PC-3 (cell line): ENCODE measurements at regions of chr11 and their contacts with region 1.

Region 1: DNA sequence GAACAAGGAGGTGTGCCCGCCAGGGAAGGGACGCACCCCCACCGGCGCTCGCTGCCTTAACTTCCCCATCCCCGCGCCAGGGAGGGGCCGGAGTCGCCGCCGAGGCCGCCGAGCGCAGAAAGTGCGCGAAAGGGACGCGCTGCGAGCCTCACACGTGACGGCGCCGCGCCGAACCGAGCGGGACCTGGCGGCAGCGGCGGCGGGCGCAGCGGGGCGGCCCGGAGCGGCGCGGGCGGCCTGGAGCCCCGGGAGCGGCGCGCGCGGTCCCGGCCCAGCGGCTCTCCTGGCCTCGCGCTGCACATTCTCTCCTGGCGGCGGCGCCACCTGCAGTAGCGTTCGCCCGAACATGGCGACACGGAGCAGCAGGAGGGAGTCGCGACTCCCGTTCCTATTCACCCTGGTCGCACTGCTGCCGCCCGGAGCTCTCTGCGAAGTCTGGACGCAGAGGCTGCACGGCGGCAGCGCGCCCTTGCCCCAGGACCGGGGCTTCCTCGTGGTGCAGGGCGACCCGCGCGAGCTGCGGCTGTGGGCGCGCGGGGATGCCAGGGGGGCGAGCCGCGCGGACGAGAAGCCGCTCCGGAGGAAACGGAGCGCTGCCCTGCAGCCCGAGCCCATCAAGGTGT is at the start of gene SORL1:
- DNase-seq: peak; percentile 90
- ATAC-seq: peak; percentile 82
- H3K4me3 ChIP-seq: peak within 1 kb of the TSS; percentile 89
- H3K27ac ChIP-seq: peak within 1 kb of the TSS; percentile 65
- H3K4me1 ChIP-seq: peaks cover 39% of the 10 kb centered on the region
- H3K27me3 ChIP-seq: no peaks in the 10 kb centered on the region
- CTCF ChIP-seq: peak; percentile 68
- total RNA-seq, gene SORL1: 53.7 and 74.5 TPM in 2 replicates

Region 2: DNA sequence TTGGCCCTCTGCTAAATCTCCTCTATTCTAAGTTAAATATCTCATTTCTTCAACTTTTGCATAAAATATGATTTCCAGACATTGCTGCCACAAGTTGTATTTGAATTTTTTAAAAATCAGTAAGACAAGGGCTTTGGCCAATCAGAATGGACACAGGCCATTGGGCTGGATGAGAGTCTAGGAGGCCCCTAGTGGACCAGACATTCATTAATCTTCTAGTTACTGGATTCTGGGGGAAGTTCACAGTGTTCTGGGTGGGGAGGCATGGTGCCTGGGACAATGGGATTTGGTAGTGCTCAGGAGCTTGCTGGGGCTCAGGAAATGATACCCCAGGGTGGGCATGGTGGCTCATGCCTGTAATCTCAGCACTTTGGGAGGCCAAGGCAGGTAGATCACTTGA is 12.3 kb before region 1 on chr11:
- CTCF ChIA-PET with region 1: no interaction called
- POLR2A ChIA-PET with region 1: no interaction called
- intact Hi-C with region 1: no loop called
- DNase-seq: no peak
- ATAC-seq: no peak
- H3K4me3 ChIP-seq: no peak overlapping the region
- H3K27ac ChIP-seq: no peak overlapping the region
- H3K4me1 ChIP-seq: no peaks in the 10 kb centered on the region
- H3K27me3 ChIP-seq: no peaks in the 10 kb centered on the region
- CTCF ChIP-seq: 0 out of 2 replicates have a peak, but pooled peaks have one; percentile 10

Region 3: GRCh38 chr11:121476379-121477032 is 24.4 kb after region 1 on chr11:
- CTCF ChIA-PET with region 1: no interaction called
- POLR2A ChIA-PET with region 1: no interaction called
- intact Hi-C with region 1: loop called (anchors 1 kb)
- DNase-seq: peak; percentile 96
- ATAC-seq: peak; percentile 88
- H3K4me3 ChIP-seq: no peak overlapping the region
- H3K27ac ChIP-seq: peak overlapping the region; percentile 74
- H3K4me1 ChIP-seq: peaks cover 52% of the 10 kb centered on the region
- H3K27me3 ChIP-seq: no peaks in the 10 kb centered on the region
- CTCF ChIP-seq: no peak

Region 4: DNA sequence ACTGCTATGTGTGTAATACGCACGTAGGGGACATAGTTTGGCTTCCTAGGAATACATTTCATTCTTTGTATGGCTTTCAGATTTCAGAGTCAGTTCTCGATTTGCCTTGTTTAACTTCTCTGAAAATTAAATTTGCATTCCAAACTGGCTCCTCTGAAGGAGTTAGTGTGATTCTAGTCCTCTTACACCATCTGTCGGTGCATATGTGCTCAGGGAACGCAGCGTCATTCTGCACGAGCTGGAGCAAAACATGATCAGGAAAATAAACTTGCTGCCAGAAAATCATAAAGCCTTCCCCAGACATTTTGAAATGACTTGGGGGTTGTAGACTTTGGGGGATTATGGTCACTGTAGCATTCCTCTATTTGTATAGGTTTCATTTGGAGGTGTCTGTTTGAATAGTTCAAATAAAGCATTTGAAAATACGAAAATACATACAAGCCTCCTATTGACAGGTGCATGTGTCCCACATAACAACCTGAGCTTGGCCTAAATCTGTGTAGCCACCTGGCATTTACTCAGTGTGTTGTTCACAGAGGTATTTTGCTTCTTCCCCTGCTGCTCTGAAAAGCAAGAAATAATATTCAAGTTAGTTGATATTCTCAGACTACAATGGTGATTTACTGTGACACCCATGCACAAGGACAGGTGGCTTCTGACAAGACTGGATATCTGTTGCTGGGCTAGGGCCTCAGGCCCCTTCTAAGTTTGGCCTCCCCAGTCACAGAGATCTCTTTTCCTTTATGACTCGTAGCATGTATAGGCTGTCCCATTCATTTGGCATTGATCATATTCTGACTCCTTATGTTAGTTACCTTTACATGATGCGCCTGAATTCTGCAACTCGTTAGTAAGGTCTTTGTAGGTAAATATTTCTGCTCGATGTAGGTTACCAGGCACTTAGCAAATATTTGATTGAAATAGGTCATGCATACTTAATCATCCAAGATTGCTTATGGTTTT is 82.3 kb after region 1 on chr11:
- CTCF ChIA-PET with region 1: interaction called, 5 read pairs
- POLR2A ChIA-PET with region 1: no interaction called
- intact Hi-C with region 1: loop called (anchors 2 kb)
- DNase-seq: peak; percentile 62
- ATAC-seq: peak; percentile 72
- H3K4me3 ChIP-seq: no peak overlapping the region
- H3K27ac ChIP-seq: peak overlapping the region; percentile 15; the same call in 1 of the 2 replicates
- H3K4me1 ChIP-seq: peaks cover 21% of the 10 kb centered on the region
- H3K27me3 ChIP-seq: no peaks in the 10 kb centered on the region
- CTCF ChIP-seq: peak; percentile 52; the same call in 1 of the 2 replicates

Region 5: DNA sequence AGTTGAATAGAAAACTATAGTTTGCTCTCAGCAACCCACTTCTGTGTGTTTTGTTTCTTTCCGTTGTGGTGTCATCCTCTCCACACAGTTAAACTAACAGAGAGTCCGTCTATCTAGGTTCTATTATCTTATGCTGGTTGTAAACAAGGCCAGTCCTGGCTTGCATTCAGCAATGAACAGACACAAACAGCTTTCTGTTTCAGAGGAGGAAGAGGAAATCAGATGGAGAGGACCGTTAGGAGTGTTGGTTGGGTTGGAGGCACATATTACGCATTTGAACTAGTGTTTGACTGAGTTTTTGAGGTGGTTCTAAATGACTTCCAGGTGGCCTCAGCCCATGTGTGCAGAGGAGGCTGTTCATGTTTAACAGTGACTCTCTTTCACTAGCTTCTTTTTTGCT is 130.2 kb after region 1 on chr11:
- CTCF ChIA-PET with region 1: no interaction called
- POLR2A ChIA-PET with region 1: no interaction called
- intact Hi-C with region 1: no loop called
- DNase-seq: no peak
- ATAC-seq: no peak
- H3K4me3 ChIP-seq: no peak overlapping the region
- H3K27ac ChIP-seq: no peak overlapping the region
- H3K4me1 ChIP-seq: no peaks in the 10 kb centered on the region
- H3K27me3 ChIP-seq: no peaks in the 10 kb centered on the region
- CTCF ChIP-seq: no peak